Activated CD4-positive, alpha-beta memory T cell treated with anti-CD3 and anti-CD28 coated beads, Interleukin-2, amount 10 ng/mL, durations not matched to agents 7 days and 5 days (primary cell): ENCODE measurements at regions of chr14 and their contacts with region 1.

Region 1: GRCh38 chr14:22099942-22100763 is 426.5 kb upstream of the OR4E1 start:
- DNase-seq: peak; percentile 66
- H3K4me3 Mint-ChIP-seq: no peak overlapping the region
- H3K27ac Mint-ChIP-seq: no peak overlapping the region
- H3K4me1 Mint-ChIP-seq: peaks cover 56% of the 10 kb centered on the region
- H3K27me3 Mint-ChIP-seq: no peaks in the 10 kb centered on the region

Region 2: DNA sequence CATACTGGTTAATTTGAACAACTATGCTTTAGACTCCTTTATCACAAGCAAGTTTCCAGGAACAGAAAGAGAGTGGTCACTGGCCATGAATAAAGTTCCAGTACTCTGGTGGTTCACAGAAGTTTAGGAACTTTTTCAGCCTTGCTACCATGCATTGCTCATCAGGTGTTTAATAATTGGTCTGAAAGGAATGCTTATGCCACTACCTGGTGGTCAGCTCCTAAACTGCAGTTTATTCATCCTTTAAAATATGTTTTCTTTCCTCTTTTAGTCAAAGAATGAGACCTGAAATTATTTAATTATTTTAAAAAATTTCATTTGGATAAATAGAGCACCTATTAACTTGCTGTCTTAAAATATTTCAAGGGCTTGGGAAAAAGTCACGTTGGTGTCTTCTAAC is 166.5 kb before region 1 on chr14:
- CTCF ChIA-PET with region 1: no interaction called
- POLR2A ChIA-PET with region 1: no interaction called
- DNase-seq: no peak
- H3K4me3 Mint-ChIP-seq: no peak overlapping the region
- H3K27ac Mint-ChIP-seq: no peak overlapping the region
- H3K4me1 Mint-ChIP-seq: peaks cover 2% of the 10 kb centered on the region
- H3K27me3 Mint-ChIP-seq: peaks cover 9% of the 10 kb centered on the region

Region 3: GRCh38 chr14:22047115-22047514 is 53.0 kb before region 1 on chr14:
- CTCF ChIA-PET with region 1: interaction called, 22 read pairs
- POLR2A ChIA-PET with region 1: interaction called, 3 read pairs
- DNase-seq: peak; percentile 38
- H3K4me3 Mint-ChIP-seq: peak overlapping the region; percentile 27
- H3K27ac Mint-ChIP-seq: peak overlapping the region; percentile 76
- H3K4me1 Mint-ChIP-seq: peaks cover 42% of the 10 kb centered on the region
- H3K27me3 Mint-ChIP-seq: peaks cover 1% of the 10 kb centered on the region

Region 4: DNA sequence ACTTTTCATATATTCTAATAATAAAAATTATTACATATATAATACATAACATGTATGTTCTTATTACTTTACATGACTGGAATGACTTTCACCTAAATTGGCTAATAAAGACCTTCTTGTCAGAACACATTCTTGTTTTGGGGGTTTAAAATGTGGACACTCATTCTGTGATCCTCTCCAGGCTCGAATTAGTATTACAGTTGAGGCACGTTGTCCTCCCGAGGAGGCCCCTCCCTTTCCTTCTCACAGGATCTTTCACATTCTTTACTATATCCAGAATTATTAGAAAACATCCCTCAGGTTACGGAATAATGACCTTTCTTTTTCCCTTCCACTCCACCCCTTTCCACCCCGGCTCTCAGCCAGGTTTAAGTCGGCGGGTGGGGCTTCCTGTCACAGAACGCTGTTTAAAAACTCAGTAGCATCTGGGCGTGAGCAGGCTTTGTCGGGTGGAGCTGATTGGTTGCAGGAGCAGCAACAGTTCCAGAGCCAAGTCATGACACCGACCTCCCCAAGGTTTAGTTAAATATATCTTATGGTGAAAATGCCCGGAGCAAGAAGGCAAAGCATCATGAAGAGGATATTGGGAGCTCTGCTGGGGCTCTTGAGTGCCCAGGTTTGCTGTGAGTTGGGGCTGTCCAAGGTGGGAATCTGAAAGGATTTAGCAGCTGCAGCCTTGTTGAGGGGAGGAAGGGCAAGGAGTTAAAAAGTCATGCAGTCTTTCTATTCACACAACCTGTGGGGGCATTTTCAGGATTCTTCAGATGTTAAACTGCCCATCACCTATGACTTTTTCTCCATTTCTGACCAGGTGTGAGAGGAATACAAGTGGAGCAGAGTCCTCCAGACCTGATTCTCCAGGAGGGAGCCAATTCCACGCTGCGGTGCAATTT is 29.8 kb before region 1 on chr14:
- CTCF ChIA-PET with region 1: interaction called, 19 read pairs
- POLR2A ChIA-PET with region 1: interaction called, 8 read pairs
- DNase-seq: peak; percentile 70
- H3K4me3 Mint-ChIP-seq: peak overlapping the region; percentile 91
- H3K27ac Mint-ChIP-seq: peak overlapping the region; percentile 95
- H3K4me1 Mint-ChIP-seq: peaks cover 38% of the 10 kb centered on the region
- H3K27me3 Mint-ChIP-seq: no peaks in the 10 kb centered on the region

Region 5: GRCh38 chr14:22084393-22085281 is 15.5 kb before region 1 on chr14:
- CTCF ChIA-PET with region 1: interaction called, 12 read pairs
- POLR2A ChIA-PET with region 1: interaction called, 3 read pairs
- DNase-seq: no peak
- H3K4me3 Mint-ChIP-seq: peak overlapping the region; percentile 56
- H3K27ac Mint-ChIP-seq: peak overlapping the region; percentile 66
- H3K4me1 Mint-ChIP-seq: peaks cover 24% of the 10 kb centered on the region
- H3K27me3 Mint-ChIP-seq: no peaks in the 10 kb centered on the region

Region 6: DNA sequence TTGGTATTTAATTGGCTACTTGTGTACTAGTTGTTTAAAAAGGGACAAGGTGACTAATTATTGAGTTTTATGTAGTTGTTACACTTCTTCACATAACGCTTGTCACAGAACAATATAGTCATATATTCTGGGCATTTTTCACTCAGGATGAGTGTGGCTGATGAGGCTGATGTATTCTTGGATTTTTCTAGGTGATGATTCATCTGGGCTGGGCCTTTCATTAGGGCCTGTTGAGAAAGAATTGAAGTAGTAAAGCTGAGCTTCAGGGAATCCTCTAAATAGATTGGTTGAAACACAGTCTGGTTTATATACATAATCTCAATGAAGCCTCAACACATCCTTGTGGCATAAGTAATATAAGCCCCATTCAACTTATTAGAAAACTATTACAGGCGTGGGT is 43.2 kb after region 1 on chr14:
- CTCF ChIA-PET with region 1: no interaction called
- POLR2A ChIA-PET with region 1: no interaction called
- DNase-seq: no peak
- H3K4me3 Mint-ChIP-seq: no peak overlapping the region
- H3K27ac Mint-ChIP-seq: no peak overlapping the region
- H3K4me1 Mint-ChIP-seq: peaks cover 2% of the 10 kb centered on the region
- H3K27me3 Mint-ChIP-seq: peaks cover 6% of the 10 kb centered on the region